ENCODE measurements at regions of chr10 and their contacts with region 1.

Region 1: GRCh38 chr10:44010873-44011602 is 362.4 kb upstream of the ZNF32 start:
- DNase-seq: peak in 1 of 2 donors; percentile 39
- ATAC-seq: peak in 7 of 8 donors; percentile 31 to 90 (median 75)
- H3K4me3 ChIP-seq: no peak overlapping the region
- H3K27ac ChIP-seq: peak overlapping the region in 6 of 10 donors; percentile 5 to 57 (median 18)
- H3K4me1 ChIP-seq: peaks cover 0 to 57% (median 38%) of the 10 kb centered on the region in 9 donors
- H3K27me3 ChIP-seq: no peaks in the 10 kb centered on the region
- CTCF ChIP-seq: no peak

Region 2: DNA sequence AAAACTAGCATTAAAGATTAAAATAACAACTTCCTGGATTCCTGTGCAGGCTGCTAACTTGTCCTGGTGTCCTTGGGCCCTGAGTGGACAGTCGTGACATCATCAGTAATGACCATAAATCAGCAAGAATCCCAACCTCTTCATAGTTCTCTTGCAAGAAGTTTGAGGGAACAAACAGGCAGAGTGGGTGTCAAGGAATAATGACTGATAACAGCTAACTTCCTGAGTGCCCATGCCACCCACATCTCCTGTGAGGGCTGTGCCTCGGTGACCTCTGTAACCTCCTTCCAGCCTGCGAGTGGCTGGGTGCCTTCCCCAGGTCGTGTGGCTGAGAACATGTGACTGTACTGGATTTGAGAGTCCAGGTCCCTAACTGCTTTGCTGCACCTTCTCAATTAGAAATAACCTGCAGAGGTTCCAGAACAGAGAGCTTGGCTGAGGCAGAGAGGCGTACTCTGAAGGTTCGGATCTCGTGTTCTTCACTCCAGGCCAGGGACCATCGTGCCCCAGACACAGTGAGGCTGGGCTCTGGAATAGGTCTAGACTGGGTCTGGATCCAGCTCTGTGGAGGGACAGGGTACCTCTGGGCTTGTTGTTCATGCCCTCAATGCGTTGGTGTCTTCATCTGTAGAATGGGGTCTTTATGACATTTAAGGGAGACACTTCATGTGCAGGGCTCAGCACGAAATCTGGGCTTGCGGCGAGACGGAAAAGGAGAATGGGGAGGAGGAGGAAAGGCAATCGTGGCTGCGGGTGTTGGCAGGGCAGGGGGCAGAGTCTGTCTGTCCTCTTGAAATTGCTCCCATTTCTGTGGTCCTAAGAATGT is 49.3 kb before region 1 on chr10:
- intact Hi-C with region 1: loop called in 1 of 10 experiments (anchors 2 kb)
- DNase-seq: peak in 1 of 2 donors; percentile 15
- ATAC-seq: peak in 7 of 8 donors; percentile 16 to 54 (median 38)
- H3K4me3 ChIP-seq: no peak overlapping the region
- H3K27ac ChIP-seq: peak overlapping the region in 6 of 10 donors; percentile 14 to 88 (median 50)
- H3K4me1 ChIP-seq: peaks cover 3 to 65% (median 25%) of the 10 kb centered on the region in 9 donors
- H3K27me3 ChIP-seq: no peaks in the 10 kb centered on the region
- CTCF ChIP-seq: no peak

Region 3: GRCh38 chr10:43970717-43971116 is 40.3 kb before region 1 on chr10:
- intact Hi-C with region 1: loop called in 1 of 10 experiments (anchors 5 kb)
- DNase-seq: no peak
- ATAC-seq: peak in 3 of 8 donors; percentile 6 to 38 (median 31)
- H3K4me3 ChIP-seq: no peak overlapping the region
- H3K27ac ChIP-seq: no peak overlapping the region
- H3K4me1 ChIP-seq: peaks cover 0 to 32% (median 6%) of the 10 kb centered on the region in 9 donors
- H3K27me3 ChIP-seq: no peaks in the 10 kb centered on the region
- CTCF ChIP-seq: no peak

Measured in heart right ventricle (tissue), 16 donors.